ENCODE measurements at regions of chr3 and their contacts with region 1.

Region 1: GRCh38 chr3:119498186-119498987 is at the start of gene TIMMDC1:
- DNase-seq: peak; percentile 96 to 98
- ATAC-seq: peak; percentile 99
- H3K4me3 ChIP-seq: peak within 1 kb of the TSS; percentile 79
- H3K27ac ChIP-seq: peak within 1 kb of the TSS; percentile 88 to 93
- H3K4me1 ChIP-seq: peaks cover 25% of the 10 kb centered on the region
- CTCF ChIP-seq: no peak
- EP300 ChIP-seq: no peak
- POLR2A ChIP-seq: peak; percentile 82
- RAD21 ChIP-seq: no peak; a peak in 1 of 5 replicates
- polyA plus RNA-seq, gene TIMMDC1: 127 and 135 TPM in 2 replicates

Region 2: DNA sequence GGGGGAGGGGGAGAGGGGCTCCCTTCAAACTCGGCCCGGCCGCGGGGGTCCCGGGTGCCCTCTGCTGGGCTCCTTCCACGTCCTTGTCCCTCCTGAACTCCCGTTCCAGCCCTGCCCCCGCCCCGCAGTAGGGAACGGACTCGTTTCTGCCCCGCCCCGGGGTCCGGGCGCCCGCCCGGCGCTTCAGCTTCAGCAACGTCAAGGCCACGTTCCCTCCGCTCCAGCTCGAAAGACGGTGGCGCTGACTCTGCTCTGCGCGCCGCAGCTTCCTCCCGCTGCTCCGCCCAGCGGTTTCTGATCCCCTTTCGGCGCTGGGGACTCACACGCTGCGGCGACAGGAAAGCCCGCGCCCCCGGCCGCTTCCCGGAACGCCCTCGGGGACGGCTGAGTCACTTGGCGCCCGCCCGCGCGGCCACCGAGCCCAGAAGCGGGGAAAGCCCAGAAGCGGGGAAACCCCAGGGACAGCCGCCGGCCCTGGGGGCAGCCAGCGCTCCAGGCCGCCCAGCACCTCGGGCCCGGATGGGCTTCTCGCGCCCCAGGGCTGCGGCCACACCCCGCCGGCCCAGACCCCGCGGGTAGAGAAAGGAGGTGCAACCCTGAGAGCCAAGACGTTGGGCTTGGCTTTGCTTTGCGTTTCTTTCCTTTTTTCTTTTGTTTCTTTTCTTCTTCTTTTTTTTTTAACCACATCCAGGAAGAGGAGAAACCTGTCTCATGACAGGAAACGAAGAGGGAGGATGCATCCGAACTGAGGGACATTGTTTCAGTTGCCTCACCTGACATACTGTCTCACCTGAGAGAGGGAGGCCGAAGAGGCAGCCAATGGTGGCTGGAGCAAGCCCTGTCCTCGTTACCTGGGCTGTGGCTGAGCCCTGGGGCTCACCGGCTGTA is 175.3 kb before region 1 on chr3:
- CTCF ChIA-PET with region 1: no interaction called
- POLR2A ChIA-PET with region 1: interaction called, 14 read pairs
- DNase-seq: peak; percentile 66 to 79
- ATAC-seq: peak; percentile 93
- H3K4me3 ChIP-seq: peak overlapping the region; percentile 68
- H3K27ac ChIP-seq: peak overlapping the region; percentile 93 to 97
- H3K4me1 ChIP-seq: peaks cover 9% of the 10 kb centered on the region; the same call in 2 of the 3 replicates
- CTCF ChIP-seq: peak; percentile 1
- EP300 ChIP-seq: no peak
- POLR2A ChIP-seq: peak; percentile 76
- RAD21 ChIP-seq: peak in 1 of 2 experiments; percentile 38; a peak in 2 of 5 replicates

Region 3: DNA sequence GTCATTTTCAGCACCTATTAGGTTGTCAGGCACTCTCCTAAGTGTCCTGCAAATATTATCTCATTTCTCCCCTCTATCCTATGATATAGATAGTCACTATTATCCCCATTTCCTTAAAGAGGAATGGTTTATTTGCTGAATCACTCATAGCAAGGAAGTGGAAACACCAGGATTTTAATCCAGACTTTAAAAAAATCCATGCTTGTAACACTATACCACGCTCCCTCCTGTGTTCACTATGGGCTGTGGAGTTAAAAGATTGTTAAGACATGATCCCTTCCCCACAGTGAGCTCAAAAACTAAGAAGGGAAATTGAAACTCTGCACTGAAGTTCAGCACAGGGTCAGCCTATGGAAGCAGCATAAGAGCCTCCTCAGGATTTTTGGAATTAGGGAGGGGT is 95.2 kb before region 1 on chr3:
- CTCF ChIA-PET with region 1: no interaction called
- POLR2A ChIA-PET with region 1: no interaction called
- DNase-seq: no peak
- ATAC-seq: no peak; a peak in 2 of 6 replicates
- H3K4me3 ChIP-seq: no peak overlapping the region
- H3K27ac ChIP-seq: no peak overlapping the region
- H3K4me1 ChIP-seq: no peaks in the 10 kb centered on the region
- CTCF ChIP-seq: no peak
- EP300 ChIP-seq: no peak
- POLR2A ChIP-seq: no peak
- RAD21 ChIP-seq: no peak

Region 4: DNA sequence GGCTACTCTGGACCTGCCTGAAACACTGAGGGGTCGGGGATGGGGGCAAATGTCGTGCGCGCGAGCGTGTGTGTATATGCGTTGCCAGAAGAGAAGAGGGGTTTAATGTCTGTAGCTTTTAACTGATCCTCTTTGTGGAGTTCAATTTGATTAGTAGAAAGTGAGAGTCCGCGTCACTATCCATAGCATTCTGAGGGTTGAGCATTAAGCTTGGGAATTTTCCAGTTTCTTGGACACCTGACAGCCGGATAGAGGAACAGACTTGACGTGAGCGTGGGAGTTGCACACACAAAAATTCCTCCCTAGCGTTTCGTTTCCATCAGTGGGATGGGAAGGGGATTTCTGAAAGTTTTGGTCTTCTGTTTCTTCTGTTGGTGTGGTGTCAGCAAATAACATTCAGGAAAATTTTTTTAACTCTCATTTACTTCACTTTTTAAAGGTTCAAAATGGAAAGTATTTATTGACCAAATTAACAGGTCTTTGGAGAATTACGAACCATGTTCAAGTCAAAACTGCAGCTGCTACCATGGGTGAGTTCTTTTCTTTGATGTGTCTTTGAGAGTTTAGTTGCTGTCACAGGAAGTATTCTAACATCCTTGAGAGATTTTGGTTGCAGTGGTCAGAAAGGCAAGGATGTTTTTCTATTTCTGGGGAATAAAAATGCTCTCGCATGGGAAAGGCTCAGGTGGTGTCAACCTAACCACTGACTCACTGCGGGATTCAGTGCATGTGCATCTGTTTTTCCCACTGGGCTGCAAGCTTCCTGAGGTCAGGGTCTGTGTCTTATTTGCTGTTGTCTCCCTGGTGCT is 28.8 kb before region 1 on chr3:
- CTCF ChIA-PET with region 1: interaction called, 10 read pairs
- POLR2A ChIA-PET with region 1: interaction called, 50 read pairs
- DNase-seq: peak in 1 of 2 experiments; percentile 37
- ATAC-seq: peak; percentile 69 to 73; a peak in 5 of 6 replicates
- H3K4me3 ChIP-seq: peak overlapping the region; percentile 76
- H3K27ac ChIP-seq: peak overlapping the region; percentile 90 to 96
- H3K4me1 ChIP-seq: peaks cover 10% of the 10 kb centered on the region
- CTCF ChIP-seq: no peak
- EP300 ChIP-seq: no peak
- POLR2A ChIP-seq: no peak
- RAD21 ChIP-seq: no peak

Region 5: GRCh38 chr3:119536757-119537156 is 38.4 kb after region 1 on chr3:
- CTCF ChIA-PET with region 1: no interaction called
- POLR2A ChIA-PET with region 1: no interaction called
- DNase-seq: no peak
- ATAC-seq: no peak
- H3K4me3 ChIP-seq: no peak overlapping the region
- H3K27ac ChIP-seq: no peak overlapping the region
- H3K4me1 ChIP-seq: no peaks in the 10 kb centered on the region
- CTCF ChIP-seq: no peak
- EP300 ChIP-seq: no peak
- POLR2A ChIP-seq: no peak
- RAD21 ChIP-seq: no peak

Region 6: GRCh38 chr3:119937229-119937628 is 438.8 kb after region 1 on chr3:
- CTCF ChIA-PET with region 1: no interaction called
- POLR2A ChIA-PET with region 1: no interaction called
- DNase-seq: no peak
- ATAC-seq: no peak
- H3K4me3 ChIP-seq: no peak overlapping the region
- H3K27ac ChIP-seq: no peak overlapping the region
- H3K4me1 ChIP-seq: no peaks in the 10 kb centered on the region
- CTCF ChIP-seq: no peak
- EP300 ChIP-seq: no peak
- POLR2A ChIP-seq: no peak
- RAD21 ChIP-seq: no peak

Measured in A549 (cell line).